Left colon (tissue), 2 donors: ENCODE measurements at regions of chr13 and their contacts with region 1.

Region 1: DNA sequence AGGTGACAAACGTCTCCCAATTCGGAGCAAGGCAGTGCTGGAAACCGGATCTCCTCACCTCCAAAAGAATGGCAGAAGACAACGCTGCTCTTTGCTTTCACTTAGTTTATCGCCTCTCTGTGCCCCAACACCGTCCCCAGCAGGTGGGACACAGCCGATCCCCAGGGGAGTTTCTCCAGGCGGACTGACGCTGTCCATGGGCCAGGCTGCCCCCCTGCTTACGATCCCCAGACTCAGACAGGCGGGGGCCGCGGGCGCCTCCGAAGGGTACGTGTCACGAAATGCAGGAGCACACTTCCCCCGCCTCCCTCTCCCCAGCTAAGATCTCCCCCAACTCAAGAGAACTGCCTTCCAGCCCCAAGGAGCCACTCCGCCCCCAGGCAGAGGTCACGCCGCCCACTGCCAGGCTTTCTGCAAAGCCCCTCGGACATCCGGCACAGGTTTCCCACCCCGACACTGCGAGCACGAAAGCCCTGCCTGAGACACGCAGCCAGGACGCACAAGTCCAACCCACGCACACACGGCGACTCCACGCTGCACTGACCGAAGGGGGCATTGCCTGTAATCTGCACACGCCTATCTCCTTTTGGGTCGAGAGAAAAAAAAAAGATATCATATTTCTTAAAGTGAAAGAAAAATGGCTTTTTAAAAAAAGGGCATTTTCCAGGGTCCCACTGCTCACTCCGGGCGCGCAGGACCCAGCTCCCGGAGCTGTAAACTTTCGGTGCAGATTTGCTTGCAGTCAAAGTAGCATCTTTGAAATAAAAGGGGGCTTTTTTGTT is 2.0 kb downstream of the SPRY2 start:
- DNase-seq: peak; percentile 70 to 73
- ATAC-seq: peak; percentile 21

Region 2: DNA sequence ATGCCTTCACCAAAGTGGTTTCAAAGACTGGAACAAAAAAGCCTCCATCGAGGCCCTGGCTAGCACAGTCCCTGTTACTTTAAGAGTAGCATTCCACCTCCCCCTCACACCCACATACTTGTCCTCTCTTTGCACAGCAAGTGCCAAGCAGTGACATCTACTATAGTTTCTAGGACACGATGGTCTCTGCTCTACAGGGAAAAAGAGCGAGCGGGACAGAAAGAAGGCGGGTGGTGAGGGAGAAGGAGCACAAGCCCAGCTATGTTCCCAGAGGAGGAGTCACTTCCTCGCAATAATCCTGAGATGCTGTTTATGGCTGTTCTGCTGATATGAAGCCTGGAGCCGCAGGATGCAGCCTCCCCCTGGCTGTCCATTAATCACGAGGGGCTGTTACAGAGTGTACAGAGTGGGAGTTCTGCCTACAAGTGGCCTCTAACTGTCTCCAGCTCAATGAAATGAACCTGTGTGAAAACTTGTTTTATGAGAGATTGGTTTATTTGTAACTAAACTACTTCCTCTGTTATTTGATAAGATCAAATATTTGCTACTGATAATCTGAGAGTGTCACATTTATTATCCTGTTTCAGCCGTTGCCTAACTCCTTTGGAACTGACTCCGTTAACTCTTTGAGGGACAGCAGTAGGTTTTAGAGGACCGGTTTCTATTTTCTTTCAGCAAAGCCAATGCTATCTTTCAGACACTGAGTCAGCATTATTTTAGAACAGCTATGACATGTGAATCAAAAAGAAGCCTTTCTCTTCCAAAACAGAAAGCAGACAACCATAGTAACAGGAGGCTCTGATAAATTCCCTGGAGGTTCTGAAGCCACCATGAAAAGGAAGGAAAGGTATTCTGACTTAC is 206.0 kb before region 1 on chr13:
- intact Hi-C with region 1: loop called in 1 of 2 experiments (anchors 10 kb)
- DNase-seq: peak; percentile 70 to 89
- ATAC-seq: peak; percentile 93